Naive thymus-derived CD4-positive, alpha-beta T cell (primary cell): ENCODE measurements at regions of chr19 and their contacts with region 1.

Region 1: GRCh38 chr19:41597600-41598041 is 21.7 kb downstream of the CEACAM21 start:
- DNase-seq: peak; percentile 35 to 77 (median 69)
- ATAC-seq: peak; percentile 93
- H3K4me3 ChIP-seq: no peak overlapping the region
- H3K4me3 Mint-ChIP-seq: peak overlapping the region in 3 of 10 donors; percentile 10 to 78 (median 19)
- H3K27ac ChIP-seq: no peak overlapping the region
- H3K27ac Mint-ChIP-seq: peak overlapping the region in 1 of 9 donors; percentile 17
- H3K4me1 ChIP-seq: no peaks in the 10 kb centered on the region
- H3K4me1 Mint-ChIP-seq: peaks cover 9 to 17% (median 12%) of the 10 kb centered on the region in 7 donors
- H3K27me3 ChIP-seq: no peaks in the 10 kb centered on the region
- H3K27me3 Mint-ChIP-seq: peaks cover 0 to 38% (median 9%) of the 10 kb centered on the region in 5 donors

Region 2: DNA sequence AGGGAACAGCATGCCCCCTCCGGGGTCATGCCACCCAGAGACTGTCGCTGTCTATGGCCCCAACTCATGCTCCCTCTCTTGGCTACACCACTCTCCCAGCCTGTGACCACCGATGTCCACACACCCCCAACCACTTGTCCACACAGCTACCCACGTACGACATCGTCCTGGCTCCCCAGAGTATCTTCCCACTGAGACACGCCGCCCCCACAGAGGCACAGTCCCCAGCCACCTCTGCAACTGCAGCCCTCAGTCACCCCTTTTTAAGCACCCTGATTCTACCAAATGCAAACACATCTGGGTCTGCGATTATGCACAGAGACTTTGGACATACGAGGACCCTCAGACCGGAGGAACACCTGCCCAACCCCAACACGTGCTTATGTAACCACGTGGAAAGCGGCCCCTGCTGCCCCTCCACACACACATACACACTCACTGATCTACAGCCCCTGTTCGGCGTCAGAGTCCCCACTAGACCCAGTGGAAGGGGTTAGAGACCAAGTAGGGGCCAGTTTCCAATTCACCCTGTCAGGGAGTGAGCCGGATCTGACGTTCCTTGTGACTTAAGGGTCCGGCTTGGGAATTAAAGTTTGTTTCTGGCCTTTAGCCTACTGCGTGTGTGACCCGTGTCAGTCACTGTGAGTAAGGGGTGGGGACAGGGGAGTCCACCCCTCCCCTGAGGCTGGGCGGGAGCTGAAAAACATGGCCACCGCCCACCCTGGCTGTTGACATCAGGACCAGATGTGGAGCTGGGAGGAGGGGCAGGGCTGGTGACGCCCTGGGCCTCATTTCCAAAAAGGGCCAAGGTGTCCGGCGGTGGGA is 390.5 kb before region 1 on chr19:
- CTCF ChIA-PET with region 1: no interaction called
- POLR2A ChIA-PET with region 1: no interaction called
- intact Hi-C with region 1: loop called in 1 of 2 experiments (anchors 5 kb)
- DNase-seq: no peak
- ATAC-seq: no peak
- H3K4me3 ChIP-seq: no peak overlapping the region
- H3K4me3 Mint-ChIP-seq: no peak overlapping the region
- H3K27ac ChIP-seq: no peak overlapping the region
- H3K27ac Mint-ChIP-seq: peak overlapping the region in 6 of 9 donors; percentile 15 to 85 (median 54)
- H3K4me1 ChIP-seq: no peaks in the 10 kb centered on the region
- H3K4me1 Mint-ChIP-seq: peaks cover 3 to 12% (median 7%) of the 10 kb centered on the region in 7 donors
- H3K27me3 ChIP-seq: no peaks in the 10 kb centered on the region
- H3K27me3 Mint-ChIP-seq: no peaks in the 10 kb centered on the region

Region 3: DNA sequence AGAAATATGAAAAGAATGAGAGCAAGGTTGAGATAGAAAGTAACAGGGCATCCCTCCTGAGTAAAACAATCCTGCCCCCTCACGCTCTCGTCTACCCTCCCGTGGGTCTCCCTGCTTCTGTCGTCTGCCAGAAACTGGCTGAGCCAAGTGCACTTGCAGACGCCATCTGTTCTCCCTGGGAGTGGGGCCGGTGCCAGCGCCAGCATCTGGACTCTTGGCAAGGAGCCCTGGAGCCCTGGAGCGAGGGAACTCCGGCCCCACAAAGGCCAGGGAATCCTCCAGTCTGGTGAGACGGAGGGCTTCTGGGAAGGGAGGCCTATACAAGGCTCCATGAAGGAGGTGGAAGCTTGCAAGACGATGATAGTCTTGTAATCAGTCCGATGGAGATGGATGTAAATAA is 223.6 kb before region 1 on chr19:
- CTCF ChIA-PET with region 1: no interaction called
- POLR2A ChIA-PET with region 1: no interaction called
- intact Hi-C with region 1: no loop called
- DNase-seq: no peak
- ATAC-seq: no peak
- H3K4me3 ChIP-seq: no peak overlapping the region
- H3K4me3 Mint-ChIP-seq: no peak overlapping the region
- H3K27ac ChIP-seq: no peak overlapping the region
- H3K27ac Mint-ChIP-seq: no peak overlapping the region
- H3K4me1 ChIP-seq: peaks cover 0 to 4% of the 10 kb centered on the region in 2 donors
- H3K4me1 Mint-ChIP-seq: peaks cover 12 to 27% (median 19%) of the 10 kb centered on the region in 7 donors
- H3K27me3 ChIP-seq: no peaks in the 10 kb centered on the region
- H3K27me3 Mint-ChIP-seq: no peaks in the 10 kb centered on the region

Region 4: GRCh38 chr19:41449079-41449864 is 148.3 kb before region 1 on chr19:
- CTCF ChIA-PET with region 1: interaction called, 22 read pairs
- POLR2A ChIA-PET with region 1: no interaction called
- intact Hi-C with region 1: loop called (anchors 1 kb)
- DNase-seq: peak; percentile 48 to 78 (median 67)
- ATAC-seq: peak; percentile 97
- H3K4me3 ChIP-seq: peak overlapping the region; percentile 41
- H3K4me3 Mint-ChIP-seq: peak overlapping the region; percentile 69 to 86 (median 80)
- H3K27ac ChIP-seq: no peak overlapping the region
- H3K27ac Mint-ChIP-seq: peak overlapping the region in 5 of 9 donors; percentile 59 to 80 (median 67)
- H3K4me1 ChIP-seq: peaks cover 0 to 10% of the 10 kb centered on the region in 2 donors
- H3K4me1 Mint-ChIP-seq: peaks cover 7 to 32% (median 13%) of the 10 kb centered on the region in 7 donors
- H3K27me3 ChIP-seq: no peaks in the 10 kb centered on the region
- H3K27me3 Mint-ChIP-seq: peaks cover 0 to 3% (median 0%) of the 10 kb centered on the region in 5 donors

Region 5: GRCh38 chr19:41515015-41515652 is 82.5 kb before region 1 on chr19:
- CTCF ChIA-PET with region 1: interaction called, 3 read pairs
- POLR2A ChIA-PET with region 1: no interaction called
- intact Hi-C with region 1: loop called in 1 of 2 experiments (anchors 1 kb)
- DNase-seq: no peak
- ATAC-seq: no peak
- H3K4me3 ChIP-seq: no peak overlapping the region
- H3K4me3 Mint-ChIP-seq: no peak overlapping the region
- H3K27ac ChIP-seq: no peak overlapping the region
- H3K27ac Mint-ChIP-seq: no peak overlapping the region
- H3K4me1 ChIP-seq: no peaks in the 10 kb centered on the region
- H3K4me1 Mint-ChIP-seq: peaks cover 8 to 16% (median 14%) of the 10 kb centered on the region in 7 donors
- H3K27me3 ChIP-seq: no peaks in the 10 kb centered on the region
- H3K27me3 Mint-ChIP-seq: peaks cover 11 to 61% (median 46%) of the 10 kb centered on the region in 5 donors

Region 6: DNA sequence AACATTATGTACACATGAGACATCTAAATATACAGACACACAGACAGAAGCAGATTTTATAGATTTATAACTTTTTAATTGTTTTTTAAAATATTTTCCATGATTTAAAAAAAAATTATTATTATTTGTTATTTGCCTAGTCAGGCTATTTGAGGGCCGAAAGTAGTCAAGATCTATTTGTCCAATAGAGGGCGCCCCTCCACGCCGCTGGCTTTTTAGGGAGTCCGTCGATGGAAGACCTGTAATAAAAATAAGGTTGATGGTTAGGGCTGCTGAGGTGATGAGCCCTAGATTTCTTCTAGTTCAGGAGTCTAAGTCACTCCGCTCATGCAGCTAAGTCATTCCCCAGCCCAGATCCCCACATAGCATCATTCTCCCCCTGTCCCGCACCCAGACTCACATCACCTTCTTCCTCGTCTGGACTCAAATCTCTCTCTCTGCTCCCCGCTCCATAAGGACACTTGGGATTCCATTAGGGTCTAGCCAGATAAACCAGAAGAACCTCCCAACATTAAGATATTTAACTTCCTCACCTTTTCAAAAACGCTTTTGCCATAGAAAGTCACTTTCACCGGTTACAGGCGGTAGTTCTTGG is 55.5 kb before region 1 on chr19:
- CTCF ChIA-PET with region 1: interaction called, 6 read pairs
- POLR2A ChIA-PET with region 1: no interaction called
- intact Hi-C with region 1: loop called in 1 of 2 experiments (anchors 1 kb)
- DNase-seq: peak; percentile 53 to 71 (median 64)
- ATAC-seq: peak; percentile 59
- H3K4me3 ChIP-seq: no peak overlapping the region
- H3K4me3 Mint-ChIP-seq: peak overlapping the region; percentile 51 to 77 (median 62)
- H3K27ac ChIP-seq: peak overlapping the region; percentile 26
- H3K27ac Mint-ChIP-seq: peak overlapping the region; percentile 44 to 97 (median 88)
- H3K4me1 ChIP-seq: peaks cover 38 to 42% of the 10 kb centered on the region in 2 donors
- H3K4me1 Mint-ChIP-seq: peaks cover 38 to 57% (median 52%) of the 10 kb centered on the region in 7 donors
- H3K27me3 ChIP-seq: no peaks in the 10 kb centered on the region
- H3K27me3 Mint-ChIP-seq: no peaks in the 10 kb centered on the region

Region 7: DNA sequence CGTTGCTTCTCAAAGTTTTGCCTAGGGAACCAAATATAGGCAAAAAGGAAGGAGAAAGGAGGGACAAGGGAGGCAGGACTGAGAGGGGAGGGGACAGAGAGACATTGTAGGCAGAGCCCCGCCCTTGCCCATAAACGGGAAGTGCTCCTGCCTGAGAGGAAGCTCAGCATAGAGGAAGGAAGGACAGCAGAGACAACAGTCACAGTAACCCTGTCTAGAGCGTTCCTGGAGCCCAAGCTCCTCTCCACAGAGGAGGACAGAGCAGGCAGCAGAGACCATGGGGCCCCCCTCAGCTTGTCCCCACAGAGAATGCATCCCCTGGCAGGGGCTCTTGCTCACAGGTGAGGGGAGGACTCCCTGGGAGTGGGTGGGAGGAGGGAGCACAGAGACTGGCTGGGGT is 21.6 kb before region 1 on chr19 and contains the start of gene CEACAM21:
- CTCF ChIA-PET with region 1: interaction called, 25 read pairs
- POLR2A ChIA-PET with region 1: interaction called, 3 read pairs
- intact Hi-C with region 1: loop called in 1 of 2 experiments (anchors 2 kb)
- DNase-seq: peak in 7 of 9 donors; percentile 35 to 49 (median 45)
- ATAC-seq: peak; percentile 99
- H3K4me3 ChIP-seq: peak within 1 kb of the TSS; percentile 34
- H3K4me3 Mint-ChIP-seq: peak within 1 kb of the TSS; percentile 75 to 85 (median 79)
- H3K27ac ChIP-seq: peak within 1 kb of the TSS; percentile 64
- H3K27ac Mint-ChIP-seq: peak within 1 kb of the TSS; percentile 79 to 93 (median 87)
- H3K4me1 ChIP-seq: peaks cover 6 to 31% of the 10 kb centered on the region in 2 donors
- H3K4me1 Mint-ChIP-seq: peaks cover 27 to 43% (median 35%) of the 10 kb centered on the region in 7 donors
- H3K27me3 ChIP-seq: no peaks in the 10 kb centered on the region
- H3K27me3 Mint-ChIP-seq: no peaks in the 10 kb centered on the region
- total RNA-seq, gene CEACAM21: 40.1 to 64.5 (median 50.0) TPM